Panc1 (cell line): ENCODE measurements at regions of chr10 and their contacts with region 1.

Region 1: DNA sequence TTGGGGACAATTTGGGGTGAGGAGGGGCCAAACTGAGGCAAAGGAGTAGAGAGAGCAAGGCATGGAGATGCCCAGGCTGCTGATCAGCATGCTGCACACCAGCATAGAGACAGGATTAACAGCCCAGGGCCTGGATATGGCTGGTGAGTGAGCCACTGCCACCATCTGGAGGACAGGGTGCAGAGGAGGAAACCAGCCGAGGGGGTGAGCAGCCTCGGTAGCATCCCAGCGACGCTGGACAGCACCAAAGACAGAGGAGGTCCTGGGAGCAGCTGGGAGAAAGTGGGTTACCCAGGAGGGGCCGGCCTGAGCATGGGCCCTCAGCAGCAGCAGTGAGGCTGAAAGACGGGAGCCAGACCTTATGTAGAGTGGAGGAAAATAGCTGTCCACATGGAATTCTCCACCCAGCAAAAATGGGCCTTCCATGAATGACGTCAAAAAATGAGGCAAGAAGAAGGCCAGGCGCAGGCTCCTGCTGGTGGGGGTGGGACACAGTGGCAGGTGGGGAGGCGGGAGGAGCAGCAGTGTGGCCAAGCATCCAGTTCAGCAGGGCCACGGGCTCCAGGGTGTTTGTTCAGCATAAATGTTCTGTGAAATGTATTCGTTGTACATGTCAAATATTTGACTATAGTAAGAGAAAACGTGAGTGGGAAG is 16.7 kb downstream of the RET start:
- DNase-seq: no peak
- ATAC-seq: peak; percentile 86
- H3K4me3 ChIP-seq: no peak overlapping the region
- H3K27ac ChIP-seq: no peak overlapping the region
- H3K4me1 ChIP-seq: peaks cover 5% of the 10 kb centered on the region; the same call in 1 of the 2 replicates
- H3K27me3 ChIP-seq: no peaks in the 10 kb centered on the region
- CTCF ChIP-seq: no peak

Region 2: GRCh38 chr10:42979721-42980467 is 113.7 kb before region 1 on chr10:
- CTCF ChIA-PET with region 1: no interaction called
- POLR2A ChIA-PET with region 1: no interaction called
- in situ Hi-C with region 1: no loop called
- intact Hi-C with region 1: no loop called
- DNase-seq: no peak
- ATAC-seq: no peak
- H3K4me3 ChIP-seq: no peak overlapping the region
- H3K27ac ChIP-seq: no peak overlapping the region
- H3K4me1 ChIP-seq: 0 out of 2 replicates have a peak, but pooled peaks cover 2% of the 10 kb centered on the region
- H3K27me3 ChIP-seq: no peaks in the 10 kb centered on the region
- CTCF ChIP-seq: no peak

Region 3: DNA sequence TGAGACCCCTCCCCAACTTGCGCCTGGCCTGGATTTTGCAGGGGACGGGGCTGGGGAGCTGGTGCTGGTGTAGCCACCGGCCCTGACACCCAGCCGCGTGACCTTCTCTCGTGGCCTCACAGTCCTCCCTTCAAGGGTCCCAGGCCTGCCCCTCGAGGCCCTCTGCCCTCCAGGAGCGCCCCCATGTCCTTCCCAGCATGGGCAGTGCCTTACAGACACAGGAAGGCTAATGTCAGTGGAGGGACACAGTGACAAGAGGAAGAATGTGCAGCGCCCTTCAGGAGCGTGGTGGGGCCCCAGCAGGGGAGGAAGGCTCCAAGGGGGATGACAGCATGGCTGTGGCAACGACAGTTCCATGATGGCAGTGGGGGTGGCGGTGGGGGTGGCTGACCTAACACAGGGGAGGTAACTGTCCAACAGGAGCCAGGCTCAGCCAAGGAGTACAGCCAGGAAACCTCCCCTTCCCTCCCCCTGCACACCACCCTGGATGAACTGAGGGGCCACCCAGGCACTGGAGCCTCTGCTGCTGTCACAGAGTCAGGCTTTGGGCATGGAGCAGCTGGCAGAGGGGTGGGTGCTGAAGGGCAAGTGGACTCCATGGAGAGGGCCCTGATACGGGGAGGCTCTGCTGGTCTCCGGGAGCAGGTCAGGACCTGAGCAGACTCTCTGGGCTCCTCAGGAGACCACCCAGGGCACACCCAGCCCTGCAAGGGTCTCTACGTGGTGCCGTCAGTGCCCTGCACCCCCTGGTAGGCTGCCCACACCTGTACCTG is 92.7 kb before region 1 on chr10:
- CTCF ChIA-PET with region 1: no interaction called
- POLR2A ChIA-PET with region 1: no interaction called
- in situ Hi-C with region 1: no loop called
- intact Hi-C with region 1: no loop called
- DNase-seq: no peak
- ATAC-seq: 0 out of 2 replicates have a peak, but pooled peaks have one; percentile 15
- H3K4me3 ChIP-seq: no peak overlapping the region
- H3K27ac ChIP-seq: no peak overlapping the region
- H3K4me1 ChIP-seq: no peaks in the 10 kb centered on the region
- H3K27me3 ChIP-seq: peaks cover 2% of the 10 kb centered on the region
- CTCF ChIP-seq: no peak

Region 4: DNA sequence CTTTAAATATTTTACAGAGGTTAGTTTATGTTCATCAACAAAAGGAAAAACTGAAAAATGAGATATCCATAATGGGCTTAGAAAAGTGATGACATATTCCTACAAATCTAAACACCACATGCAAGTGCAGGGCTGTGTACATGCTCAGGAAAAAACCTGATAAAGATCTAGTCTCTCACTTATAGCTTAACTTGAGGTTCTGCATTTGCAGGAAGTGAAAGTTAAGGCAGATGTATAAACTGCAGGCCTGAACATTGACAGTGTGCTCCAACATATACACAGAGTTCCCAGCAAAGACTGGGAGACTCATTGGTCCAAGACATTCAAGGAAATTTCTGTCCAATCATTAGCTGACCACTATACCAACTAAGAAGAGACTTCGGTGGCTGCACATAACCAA is 80.5 kb before region 1 on chr10:
- CTCF ChIA-PET with region 1: no interaction called
- POLR2A ChIA-PET with region 1: interaction called, 12 read pairs
- in situ Hi-C with region 1: no loop called
- intact Hi-C with region 1: no loop called
- DNase-seq: no peak
- ATAC-seq: no peak
- H3K4me3 ChIP-seq: no peak overlapping the region
- H3K27ac ChIP-seq: no peak overlapping the region
- H3K4me1 ChIP-seq: no peaks in the 10 kb centered on the region
- H3K27me3 ChIP-seq: peaks cover 7% of the 10 kb centered on the region
- CTCF ChIP-seq: no peak

Region 5: GRCh38 chr10:43120929-43121314 is 27.4 kb after region 1 on chr10:
- CTCF ChIA-PET with region 1: no interaction called
- POLR2A ChIA-PET with region 1: no interaction called
- in situ Hi-C with region 1: no loop called
- intact Hi-C with region 1: no loop called
- DNase-seq: no peak
- ATAC-seq: no peak
- H3K4me3 ChIP-seq: no peak overlapping the region
- H3K27ac ChIP-seq: no peak overlapping the region
- H3K4me1 ChIP-seq: no peaks in the 10 kb centered on the region
- H3K27me3 ChIP-seq: no peaks in the 10 kb centered on the region
- CTCF ChIP-seq: no peak

Region 6: DNA sequence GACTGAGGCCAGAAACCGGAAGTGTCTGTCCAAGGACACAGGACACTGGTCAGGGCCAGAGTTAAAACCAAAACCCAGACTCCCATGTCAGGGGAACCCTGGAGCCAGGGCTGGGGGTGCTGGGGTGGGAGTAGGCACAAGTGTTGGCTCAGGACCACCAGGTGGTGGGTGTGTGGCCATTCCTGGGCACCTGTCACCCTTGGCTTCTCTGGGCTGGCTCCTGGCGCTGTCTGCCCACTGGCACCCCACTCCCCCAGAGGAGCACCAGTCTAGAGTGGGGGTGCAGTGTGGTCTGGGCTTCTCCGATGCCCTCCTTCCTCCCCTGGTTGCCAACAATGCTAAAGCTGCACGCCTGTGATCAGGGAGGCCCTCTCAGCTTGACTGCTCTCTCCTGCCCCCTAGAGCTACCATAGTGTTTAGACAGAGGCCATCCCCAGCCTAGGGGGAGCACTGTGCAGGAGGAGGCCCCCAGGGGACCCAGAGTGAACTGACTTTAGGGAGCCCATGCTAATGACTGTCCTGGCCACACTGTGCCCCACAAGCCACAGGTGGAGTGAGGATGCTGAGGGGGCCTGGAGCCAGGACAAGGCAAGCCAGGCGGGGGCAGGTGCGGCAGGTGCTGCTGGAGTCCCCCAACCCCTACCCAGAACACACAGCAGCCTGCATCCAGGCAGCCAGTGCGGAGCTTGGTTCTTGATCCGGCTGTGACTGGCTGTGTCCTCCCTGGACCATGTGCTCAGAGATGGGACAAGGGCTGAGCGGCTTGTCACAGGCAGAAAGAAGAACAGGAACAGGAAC is 162.3 kb after region 1 on chr10:
- CTCF ChIA-PET with region 1: no interaction called
- POLR2A ChIA-PET with region 1: no interaction called
- in situ Hi-C with region 1: no loop called
- intact Hi-C with region 1: no loop called
- DNase-seq: no peak
- ATAC-seq: peak; percentile 64
- H3K4me3 ChIP-seq: no peak overlapping the region
- H3K27ac ChIP-seq: no peak overlapping the region
- H3K4me1 ChIP-seq: peaks cover 25% of the 10 kb centered on the region
- H3K27me3 ChIP-seq: no peaks in the 10 kb centered on the region
- CTCF ChIP-seq: peak; percentile 90